CD4-positive, alpha-beta T cell (primary cell): ENCODE measurements at regions of chr4 and their contacts with region 1.

Region 1: GRCh38 chr4:82462415-82462831 is 32.0 kb downstream of the ENOPH1 start:
- DNase-seq: peak; percentile 68 to 90 (median 80)
- ATAC-seq: peak; percentile 99
- H3K4me3 ChIP-seq: no peak overlapping the region
- H3K4me3 Mint-ChIP-seq: no peak overlapping the region
- H3K27ac ChIP-seq: no peak overlapping the region
- H3K27ac Mint-ChIP-seq: no peak overlapping the region
- H3K4me1 ChIP-seq: no peaks in the 10 kb centered on the region
- H3K4me1 Mint-ChIP-seq: peaks cover 6% of the 10 kb centered on the region
- H3K27me3 ChIP-seq: no peaks in the 10 kb centered on the region
- H3K27me3 Mint-ChIP-seq: no peaks in the 10 kb centered on the region
- CTCF ChIP-seq: peak; percentile 71

Region 2: DNA sequence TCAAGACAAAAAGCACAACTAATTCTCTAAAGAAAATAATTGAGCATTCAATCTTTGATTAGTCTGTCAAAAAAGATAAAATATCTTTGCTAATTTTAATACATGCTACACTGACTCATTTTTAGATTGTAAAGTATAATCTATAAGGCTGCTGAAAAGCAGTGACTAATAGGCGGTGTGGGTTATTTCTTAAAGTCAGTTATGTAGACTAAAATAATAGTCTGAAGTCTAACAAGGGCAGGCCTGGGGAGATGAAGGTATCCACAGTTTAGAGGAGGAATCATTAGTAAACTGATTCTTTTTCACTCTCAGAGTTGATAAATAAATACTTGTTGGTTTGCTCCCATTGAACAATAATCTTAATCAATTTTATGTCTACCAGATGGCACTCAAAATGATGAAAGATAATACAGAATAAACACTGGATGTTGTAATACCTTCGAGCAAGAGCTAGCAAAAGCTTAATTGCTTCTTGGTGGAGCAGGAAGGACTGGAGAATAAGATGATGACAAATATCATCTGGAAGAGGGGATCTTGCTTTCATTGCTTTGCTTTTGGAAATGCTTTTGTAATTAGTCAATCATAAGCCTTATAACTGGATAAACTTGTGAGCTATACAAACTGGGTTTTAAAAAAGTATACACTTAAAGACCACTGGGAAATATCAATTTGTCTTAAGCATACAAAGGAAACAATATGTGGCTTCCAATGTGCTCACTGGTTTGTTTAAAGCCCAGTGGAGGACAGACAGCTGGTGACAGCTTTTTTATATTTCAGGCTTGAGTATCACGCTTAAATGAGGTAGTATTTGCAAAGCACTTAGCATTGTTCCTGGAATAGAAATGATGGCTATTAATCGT is 37.9 kb after region 1 on chr4:
- CTCF ChIA-PET with region 1: no interaction called
- POLR2A ChIA-PET with region 1: no interaction called
- intact Hi-C with region 1: no loop called
- DNase-seq: no peak
- ATAC-seq: no peak
- H3K4me3 ChIP-seq: no peak overlapping the region
- H3K4me3 Mint-ChIP-seq: no peak overlapping the region
- H3K27ac ChIP-seq: no peak overlapping the region
- H3K27ac Mint-ChIP-seq: no peak overlapping the region
- H3K4me1 ChIP-seq: no peaks in the 10 kb centered on the region
- H3K4me1 Mint-ChIP-seq: no peaks in the 10 kb centered on the region
- H3K27me3 ChIP-seq: no peaks in the 10 kb centered on the region
- H3K27me3 Mint-ChIP-seq: no peaks in the 10 kb centered on the region
- CTCF ChIP-seq: no peak

Region 3: GRCh38 chr4:82739316-82740179 is 277.1 kb after region 1 on chr4:
- CTCF ChIA-PET with region 1: no interaction called
- POLR2A ChIA-PET with region 1: no interaction called
- intact Hi-C with region 1: loop called (anchors 2 to 10 kb)
- DNase-seq: peak in 13 of 14 experiments; percentile 7 to 71 (median 29)
- ATAC-seq: peak; percentile 86
- H3K4me3 ChIP-seq: no peak overlapping the region
- H3K4me3 Mint-ChIP-seq: no peak overlapping the region
- H3K27ac ChIP-seq: no peak overlapping the region
- H3K27ac Mint-ChIP-seq: no peak overlapping the region
- H3K4me1 ChIP-seq: no peaks in the 10 kb centered on the region
- H3K4me1 Mint-ChIP-seq: no peaks in the 10 kb centered on the region
- H3K27me3 ChIP-seq: no peaks in the 10 kb centered on the region
- H3K27me3 Mint-ChIP-seq: peaks cover 5% of the 10 kb centered on the region
- CTCF ChIP-seq: peak; percentile 59

Region 4: GRCh38 chr4:82823062-82823461 is 360.6 kb after region 1 on chr4:
- CTCF ChIA-PET with region 1: no interaction called
- POLR2A ChIA-PET with region 1: no interaction called
- intact Hi-C with region 1: loop called in 1 of 2 experiments (anchors 10 kb)
- DNase-seq: no peak
- ATAC-seq: no peak
- H3K4me3 ChIP-seq: no peak overlapping the region
- H3K4me3 Mint-ChIP-seq: no peak overlapping the region
- H3K27ac ChIP-seq: no peak overlapping the region
- H3K27ac Mint-ChIP-seq: no peak overlapping the region
- H3K4me1 ChIP-seq: no peaks in the 10 kb centered on the region
- H3K4me1 Mint-ChIP-seq: no peaks in the 10 kb centered on the region
- H3K27me3 ChIP-seq: no peaks in the 10 kb centered on the region
- H3K27me3 Mint-ChIP-seq: no peaks in the 10 kb centered on the region
- CTCF ChIP-seq: no peak

Region 5: DNA sequence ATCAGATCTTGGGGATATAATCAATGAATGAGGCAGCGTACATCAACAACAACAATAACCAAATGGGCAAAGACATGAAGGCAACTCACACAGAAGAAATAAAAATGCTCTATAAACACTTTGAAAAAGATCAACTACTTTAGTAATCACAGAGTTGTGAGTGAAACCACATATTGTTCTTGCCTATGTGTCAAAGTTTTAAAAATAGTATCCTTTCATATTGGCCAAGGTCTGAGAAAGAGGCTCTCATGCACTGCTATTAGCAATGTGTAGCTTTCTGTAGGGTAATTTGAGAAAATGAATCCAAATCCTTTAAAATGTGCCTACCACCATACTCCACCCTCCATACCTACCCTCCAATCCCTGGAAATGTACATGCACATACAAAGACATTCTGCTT is 797.2 kb after region 1 on chr4:
- CTCF ChIA-PET with region 1: no interaction called
- POLR2A ChIA-PET with region 1: no interaction called
- intact Hi-C with region 1: loop called (anchors 2 to 5 kb)
- DNase-seq: no peak
- ATAC-seq: no peak
- H3K4me3 ChIP-seq: no peak overlapping the region
- H3K4me3 Mint-ChIP-seq: no peak overlapping the region
- H3K27ac ChIP-seq: no peak overlapping the region
- H3K27ac Mint-ChIP-seq: no peak overlapping the region
- H3K4me1 ChIP-seq: peaks cover 5% of the 10 kb centered on the region
- H3K4me1 Mint-ChIP-seq: peaks cover 6% of the 10 kb centered on the region
- H3K27me3 ChIP-seq: no peaks in the 10 kb centered on the region
- H3K27me3 Mint-ChIP-seq: no peaks in the 10 kb centered on the region
- CTCF ChIP-seq: no peak